ENCODE measurements at regions of chr10 and their contacts with region 1.

Region 1: GRCh38 chr10:101782811-101783735 is at the start of gene NPM3:
- H3K4me3 Mint-ChIP-seq: peak within 1 kb of the TSS; percentile 100
- H3K27ac Mint-ChIP-seq: peak within 1 kb of the TSS; percentile 91
- H3K4me1 Mint-ChIP-seq: peaks cover 58% of the 10 kb centered on the region
- H3K27me3 Mint-ChIP-seq: peaks cover 24% of the 10 kb centered on the region

Region 2: GRCh38 chr10:101602761-101603398 is 180.2 kb before region 1 on chr10:
- intact Hi-C with region 1: loop called (anchors 2 kb)
- H3K4me3 Mint-ChIP-seq: no peak overlapping the region
- H3K27ac Mint-ChIP-seq: no peak overlapping the region
- H3K4me1 Mint-ChIP-seq: no peaks in the 10 kb centered on the region
- H3K27me3 Mint-ChIP-seq: no peaks in the 10 kb centered on the region

Region 3: GRCh38 chr10:102090772-102091171 is 307.7 kb after region 1 on chr10:
- intact Hi-C with region 1: no loop called
- H3K4me3 Mint-ChIP-seq: no peak overlapping the region
- H3K27ac Mint-ChIP-seq: no peak overlapping the region
- H3K4me1 Mint-ChIP-seq: peaks cover 1% of the 10 kb centered on the region
- H3K27me3 Mint-ChIP-seq: no peaks in the 10 kb centered on the region